ENCODE measurements at regions of chr2 and their contacts with region 1.

Region 1: GRCh38 chr2:128232965-128233789 is 85.5 kb downstream of the HS6ST1 start:
- DNase-seq: peak; percentile 17
- ATAC-seq: peak; percentile 100
- H3K4me3 ChIP-seq: peak overlapping the region; percentile 75
- H3K27ac ChIP-seq: no peak overlapping the region
- H3K4me1 ChIP-seq: no peaks in the 10 kb centered on the region
- H3K27me3 ChIP-seq: 0 out of 4 replicates have a peak, but pooled peaks cover 0 to 3% of the 10 kb centered on the region in 2 experiments
- CTCF ChIP-seq: peak; percentile 83 to 98 (median 96)
- EP300 ChIP-seq: no peak
- POLR2A ChIP-seq: peak; percentile 32; the same call in 1 of the 2 replicates
- RAD21 ChIP-seq: peak; percentile 54

Region 2: DNA sequence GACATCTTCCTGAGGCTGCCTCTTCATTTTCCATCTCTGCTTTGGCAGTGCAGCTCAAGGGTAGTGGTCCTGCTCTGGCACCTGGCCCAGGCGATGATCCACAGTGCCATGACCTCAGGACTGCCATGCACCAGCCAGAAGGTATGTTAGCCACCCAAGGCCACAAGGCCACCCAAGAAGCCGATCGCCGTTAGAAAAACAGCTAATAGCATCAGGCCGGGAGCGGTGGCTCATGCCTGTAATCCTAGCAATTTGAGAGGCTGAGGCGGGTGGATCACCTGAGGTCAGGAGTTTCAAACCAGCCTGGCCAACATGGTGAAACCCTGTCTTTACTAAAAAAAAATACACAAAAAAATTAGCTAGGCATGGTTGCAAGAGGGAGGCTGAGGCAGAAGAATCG is 170.6 kb before region 1 on chr2:
- CTCF ChIA-PET with region 1: interaction called, 48 read pairs
- POLR2A ChIA-PET with region 1: no interaction called
- RAD21 ChIA-PET with region 1: interaction called, 4 read pairs
- SMC1A ChIA-PET with region 1: interaction called, 4 read pairs
- in situ Hi-C with region 1: loop called (anchors 5 kb)
- intact Hi-C with region 1: loop called (anchors 1 kb)
- DNase-seq: no peak
- ATAC-seq: no peak
- H3K4me3 ChIP-seq: no peak overlapping the region
- H3K27ac ChIP-seq: no peak overlapping the region
- H3K4me1 ChIP-seq: no peaks in the 10 kb centered on the region
- H3K27me3 ChIP-seq: no peaks in the 10 kb centered on the region
- CTCF ChIP-seq: no peak
- EP300 ChIP-seq: no peak
- POLR2A ChIP-seq: no peak
- RAD21 ChIP-seq: no peak

Region 3: GRCh38 chr2:128069769-128070168 is 163.4 kb before region 1 on chr2:
- CTCF ChIA-PET with region 1: interaction called, 48 read pairs
- POLR2A ChIA-PET with region 1: no interaction called
- RAD21 ChIA-PET with region 1: interaction called, 4 read pairs
- SMC1A ChIA-PET with region 1: no interaction called
- in situ Hi-C with region 1: loop called (anchors 5 kb)
- intact Hi-C with region 1: no loop called
- DNase-seq: no peak
- ATAC-seq: no peak
- H3K4me3 ChIP-seq: no peak overlapping the region
- H3K27ac ChIP-seq: no peak overlapping the region
- H3K4me1 ChIP-seq: no peaks in the 10 kb centered on the region
- H3K27me3 ChIP-seq: no peaks in the 10 kb centered on the region
- CTCF ChIP-seq: no peak
- EP300 ChIP-seq: no peak
- POLR2A ChIP-seq: no peak
- RAD21 ChIP-seq: no peak

Measured in GM12878 (cell line).